Caki2 (cell line): ENCODE measurements at regions of chr1 and their contacts with region 1.

Region 1: DNA sequence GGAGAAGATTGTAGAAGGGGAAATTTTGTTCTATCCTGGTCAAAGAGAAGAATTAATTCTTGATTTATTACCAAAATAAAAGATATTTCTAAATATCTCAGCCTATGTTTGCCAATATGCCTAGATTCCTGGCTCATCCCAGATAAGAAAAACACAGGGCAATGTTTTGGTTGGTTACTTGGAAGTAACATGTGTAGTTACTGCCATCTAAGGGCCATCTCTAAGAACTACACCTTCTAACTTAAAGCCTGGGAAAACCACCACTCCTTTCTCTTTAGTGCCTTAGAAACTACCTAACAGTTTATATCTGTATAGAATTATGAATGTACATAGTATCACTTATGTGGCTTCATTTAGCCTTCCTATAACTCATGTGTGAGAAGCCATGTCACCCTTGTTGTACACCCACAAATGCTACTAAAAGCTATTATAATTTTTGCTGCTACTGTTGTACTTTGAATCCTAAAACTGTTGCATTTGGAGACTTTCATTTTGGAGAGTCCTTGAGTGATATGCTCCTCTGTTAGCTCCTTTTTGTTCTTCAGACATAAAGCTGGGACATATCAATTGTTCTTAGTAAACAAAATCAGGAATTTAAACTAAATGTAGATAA is 4.5 kb downstream of the AIM2 start:
- DNase-seq: peak; percentile 27

Region 2: GRCh38 chr1:158177700-158178450 is 894.2 kb before region 1 on chr1:
- in situ Hi-C with region 1: loop called (anchors 10 kb)
- DNase-seq: peak; percentile 65

Region 3: DNA sequence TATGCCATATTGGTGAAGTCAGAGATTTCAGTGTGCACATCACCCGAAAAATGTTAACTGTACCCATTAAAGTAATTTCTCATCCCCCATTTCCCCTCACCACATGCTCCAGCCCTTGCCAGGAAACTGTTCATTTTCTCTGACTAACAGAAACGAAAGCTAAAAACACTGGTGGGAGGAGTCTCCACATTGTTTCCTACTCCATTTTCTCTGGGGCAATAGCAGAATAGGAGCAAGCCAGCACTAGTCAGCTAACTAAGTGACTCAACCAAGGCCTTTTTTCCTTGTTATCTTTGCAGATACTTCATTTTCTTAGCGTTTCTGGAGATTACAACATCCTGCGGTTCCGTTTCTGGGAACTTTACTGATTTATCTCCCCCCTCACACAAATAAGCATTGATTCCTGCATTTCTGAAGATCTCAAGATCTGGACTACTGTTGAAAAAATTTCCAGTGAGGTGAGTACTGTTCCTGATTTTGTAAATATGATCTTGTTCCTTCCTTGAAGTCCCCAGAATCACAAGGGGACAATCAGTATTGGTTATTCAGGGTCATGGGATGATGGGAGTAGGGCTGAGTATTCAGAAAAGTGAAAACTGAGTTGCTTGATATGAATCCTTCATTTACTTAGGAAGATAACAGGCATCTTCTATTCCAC is 62.2 kb before region 1 on chr1 and contains the start of gene IFI16:
- in situ Hi-C with region 1: no loop called
- DNase-seq: peak; percentile 66
- total RNA-seq, gene IFI16: 12.4 and 19.2 TPM in 2 replicates

Region 4: DNA sequence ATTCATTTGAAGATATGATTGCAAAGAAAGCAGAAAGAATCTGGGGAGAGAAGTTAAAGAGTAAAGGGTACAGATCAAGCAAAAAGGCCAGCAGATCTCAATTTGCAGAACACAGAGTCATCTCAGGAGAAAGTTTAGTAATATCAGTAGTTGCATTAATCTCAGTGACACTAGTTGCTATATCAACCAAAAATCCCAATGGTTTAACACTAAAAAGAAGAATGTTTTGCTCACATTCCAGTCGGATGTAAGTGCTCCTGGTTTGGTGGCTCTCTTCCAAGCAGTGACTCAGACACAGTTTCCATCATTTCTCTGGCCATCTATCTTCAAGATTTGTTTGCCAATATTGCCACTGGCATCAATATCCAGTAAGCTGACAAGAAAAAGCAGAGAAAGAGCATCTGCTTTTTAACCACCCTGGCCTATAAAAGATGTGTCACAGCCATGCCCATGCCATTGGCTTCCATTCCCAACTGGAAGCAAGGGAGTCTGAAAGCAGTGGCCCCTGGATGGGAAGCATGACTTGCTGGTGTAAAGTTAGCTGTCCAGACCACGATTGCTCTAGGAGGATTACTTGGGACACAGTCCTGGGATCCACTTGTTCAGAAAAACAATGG is 50.0 kb after region 1 on chr1:
- in situ Hi-C with region 1: no loop called
- DNase-seq: no peak